Activated B cell treated with CpG ODN at 0.5 μM for 24 hours (primary cell): ENCODE measurements at regions of chr22 and their contacts with region 1.

Region 1: DNA sequence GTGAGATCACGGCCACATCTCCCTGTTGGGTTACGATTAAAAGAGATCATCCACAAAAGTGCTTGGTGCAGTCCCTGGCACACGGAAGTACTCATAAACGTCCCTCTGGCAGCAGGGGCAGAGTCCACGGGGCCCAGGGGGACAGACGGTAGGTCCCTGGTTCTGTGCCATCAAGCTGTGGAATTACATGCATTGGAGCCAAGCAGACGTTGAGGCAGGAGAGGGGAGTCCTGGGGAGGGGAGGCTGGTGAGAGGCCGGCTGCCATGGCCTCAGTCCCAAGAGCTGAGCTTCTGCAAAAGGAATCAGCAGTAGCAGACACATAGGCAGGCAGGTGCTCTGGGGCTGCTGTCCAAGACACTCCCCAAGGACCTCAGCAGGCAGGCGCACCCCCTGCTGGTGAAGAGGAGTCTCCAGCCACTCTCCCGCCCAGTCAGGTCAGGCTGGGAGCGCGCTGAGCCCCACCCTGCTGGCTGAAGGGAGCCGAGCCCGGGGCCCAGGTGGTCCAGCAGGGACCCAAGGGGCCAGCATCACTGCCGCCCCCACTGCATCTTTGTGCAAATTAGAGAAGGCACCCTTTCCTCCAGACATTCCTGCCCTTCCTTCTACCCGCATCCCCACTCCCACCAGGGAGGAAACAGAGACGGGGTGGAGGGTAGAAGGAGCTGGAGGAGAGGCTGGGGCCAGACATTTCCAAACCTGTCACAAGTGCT is 7.6 kb upstream of the KCTD17 start:
- DNase-seq: peak; percentile 52
- ATAC-seq: peak; percentile 97
- H3K4me3 Mint-ChIP-seq: no peak overlapping the region
- H3K27ac Mint-ChIP-seq: no peak overlapping the region
- H3K4me1 Mint-ChIP-seq: peaks cover 12% of the 10 kb centered on the region
- H3K27me3 Mint-ChIP-seq: peaks cover 14% of the 10 kb centered on the region
- CTCF ChIP-seq: peak; percentile 41

Region 2: DNA sequence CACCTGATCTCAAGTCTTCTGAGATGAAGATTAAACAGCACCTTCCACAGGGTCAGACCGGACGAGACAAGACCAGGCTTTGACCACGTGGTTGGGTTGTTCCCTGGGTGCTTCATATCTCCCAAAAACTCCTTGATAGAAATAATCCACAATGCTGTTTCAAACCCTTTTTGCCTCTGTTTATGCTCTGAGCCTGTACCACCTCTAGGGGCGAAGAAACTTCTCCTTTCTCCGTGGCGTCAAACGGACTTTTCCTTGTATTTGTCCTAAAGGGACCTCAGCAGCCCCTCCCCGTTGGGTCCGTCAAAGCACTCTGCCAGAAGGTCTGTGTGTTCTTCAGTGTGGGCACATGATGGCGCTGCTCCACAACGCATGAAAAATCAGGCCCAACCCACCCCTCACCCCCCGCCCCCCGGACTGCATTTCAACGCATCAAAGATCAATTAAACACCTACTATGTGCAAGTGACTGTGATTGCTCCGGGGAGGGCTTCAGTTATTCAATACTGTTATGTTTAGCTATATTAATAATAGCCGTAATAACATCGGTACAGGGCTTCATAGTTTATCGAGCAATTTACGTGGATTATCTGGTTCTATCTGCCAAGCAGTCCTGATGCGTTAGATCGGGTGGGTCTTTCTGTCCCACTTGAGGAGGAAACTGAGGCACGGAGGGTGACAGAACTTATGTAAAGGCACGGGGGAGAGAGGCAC is 497.7 kb before region 1 on chr22:
- CTCF ChIA-PET with region 1: no interaction called
- POLR2A ChIA-PET with region 1: no interaction called
- intact Hi-C with region 1: loop called (anchors 2 kb)
- DNase-seq: no peak
- ATAC-seq: peak; percentile 82
- H3K4me3 Mint-ChIP-seq: no peak overlapping the region
- H3K27ac Mint-ChIP-seq: no peak overlapping the region
- H3K4me1 Mint-ChIP-seq: peaks cover 28% of the 10 kb centered on the region
- H3K27me3 Mint-ChIP-seq: no peaks in the 10 kb centered on the region
- CTCF ChIP-seq: no peak

Region 3: GRCh38 chr22:37300551-37301017 is 256.6 kb after region 1 on chr22:
- CTCF ChIA-PET with region 1: no interaction called
- POLR2A ChIA-PET with region 1: no interaction called
- intact Hi-C with region 1: no loop called
- DNase-seq: no peak
- ATAC-seq: peak; percentile 73
- H3K4me3 Mint-ChIP-seq: peak overlapping the region; percentile 59
- H3K27ac Mint-ChIP-seq: peak overlapping the region; percentile 90
- H3K4me1 Mint-ChIP-seq: peaks cover 57% of the 10 kb centered on the region
- H3K27me3 Mint-ChIP-seq: no peaks in the 10 kb centered on the region
- CTCF ChIP-seq: no peak